OCI-LY7 (cell line): ENCODE measurements at regions of chr20 and their contacts with region 1.

Region 1: DNA sequence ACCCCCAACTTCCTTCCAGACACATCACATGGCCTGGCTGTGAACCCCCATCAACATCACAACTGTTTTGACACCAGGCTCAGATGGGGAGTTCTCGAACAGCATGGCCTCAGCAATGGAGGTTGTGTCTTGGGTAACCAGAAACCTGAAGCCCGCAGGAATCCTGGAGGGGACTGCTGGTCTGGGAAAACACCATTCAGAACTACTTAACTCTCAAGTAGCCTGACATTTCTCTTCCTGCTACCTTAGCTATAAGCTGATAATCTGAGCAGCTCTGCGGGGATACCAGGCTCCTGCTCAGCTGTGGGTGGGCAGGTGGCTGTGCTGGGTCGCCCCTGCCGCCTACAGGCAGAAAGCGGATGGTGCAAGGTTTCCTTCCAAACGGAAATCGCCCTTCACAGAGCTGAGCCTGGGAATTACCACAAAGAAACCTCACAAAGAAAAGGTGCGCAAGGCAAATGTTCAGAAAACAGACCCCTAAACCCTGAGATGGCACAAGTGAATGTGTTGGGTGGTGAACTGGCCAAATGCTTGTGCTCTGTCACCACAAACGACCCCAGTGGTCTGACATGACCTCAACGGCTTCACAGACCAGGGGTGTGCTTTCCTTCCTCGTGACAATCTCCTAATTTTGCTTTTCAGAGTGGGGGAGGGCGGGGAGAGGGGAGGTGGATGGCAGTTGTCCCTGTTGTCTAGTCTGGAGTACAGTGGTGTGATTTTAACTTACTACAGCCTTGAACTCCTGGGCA is 29.5 kb downstream of the SNX5 start:
- DNase-seq: peak; percentile 75
- H3K4me3 ChIP-seq: no peak overlapping the region
- H3K27ac ChIP-seq: peak overlapping the region; percentile 16
- H3K4me1 ChIP-seq: peaks cover 51% of the 10 kb centered on the region
- CTCF ChIP-seq: peak; percentile 86

Region 2: GRCh38 chr20:17536944-17537444 is 402.1 kb before region 1 on chr20:
- CTCF ChIA-PET with region 1: no interaction called
- POLR2A ChIA-PET with region 1: no interaction called
- intact Hi-C with region 1: loop called (anchors 1 kb)
- DNase-seq: peak; percentile 78
- H3K4me3 ChIP-seq: no peak overlapping the region
- H3K27ac ChIP-seq: no peak overlapping the region
- H3K4me1 ChIP-seq: peaks cover 6% of the 10 kb centered on the region
- CTCF ChIP-seq: peak; percentile 90

Region 3: GRCh38 chr20:17856024-17856564 is 83.0 kb before region 1 on chr20:
- CTCF ChIA-PET with region 1: no interaction called
- POLR2A ChIA-PET with region 1: no interaction called
- intact Hi-C with region 1: loop called (anchors 5 kb)
- DNase-seq: peak; percentile 93
- H3K4me3 ChIP-seq: no peak overlapping the region
- H3K27ac ChIP-seq: peak overlapping the region; percentile 66
- H3K4me1 ChIP-seq: peaks cover 56% of the 10 kb centered on the region
- CTCF ChIP-seq: no peak

Region 4: GRCh38 chr20:17968366-17969279 is 29.6 kb after region 1 on chr20 and contains the starts of genes MGME1 and SNX5:
- CTCF ChIA-PET with region 1: interaction called, 3 read pairs
- POLR2A ChIA-PET with region 1: interaction called, 16 read pairs
- intact Hi-C with region 1: no loop called
- DNase-seq: peak; percentile 99
- H3K4me3 ChIP-seq: peak within 1 kb of the TSS; percentile 97
- H3K27ac ChIP-seq: peak within 1 kb of the TSS; percentile 95
- H3K4me1 ChIP-seq: peaks cover 25% of the 10 kb centered on the region
- CTCF ChIP-seq: no peak
- total RNA-seq, gene MGME1: 46.6 and 47.8 TPM in 2 replicates
- total RNA-seq, gene SNX5: 183 and 204 TPM in 2 replicates